Body of pancreas (tissue), 4 donors: ENCODE measurements at regions of chr1 and their contacts with region 1.

Region 1: GRCh38 chr1:181142096-181142958 is 53.8 kb downstream of the IER5 start:
- DNase-seq: peak; percentile 84 to 89 (median 86)
- ATAC-seq: peak; percentile 94
- H3K4me3 ChIP-seq: no peak overlapping the region
- H3K27ac ChIP-seq: no peak overlapping the region
- H3K4me1 ChIP-seq: peaks cover 13% of the 10 kb centered on the region
- H3K27me3 ChIP-seq: no peaks in the 10 kb centered on the region
- CTCF ChIP-seq: peak; percentile 91 to 97 (median 95)
- POLR2A ChIP-seq: no peak

Region 2: GRCh38 chr1:180898441-180899219 is 243.7 kb before region 1 on chr1:
- intact Hi-C with region 1: loop called (anchors 10 kb)
- DNase-seq: peak in 2 of 4 donors; percentile 33 to 43
- ATAC-seq: peak; percentile 70
- H3K4me3 ChIP-seq: no peak overlapping the region
- H3K27ac ChIP-seq: peak overlapping the region in 1 of 4 donors; percentile 45
- H3K4me1 ChIP-seq: peaks cover 17% of the 10 kb centered on the region
- H3K27me3 ChIP-seq: no peaks in the 10 kb centered on the region
- CTCF ChIP-seq: no peak
- POLR2A ChIP-seq: no peak

Region 3: GRCh38 chr1:181033799-181034451 is 108.4 kb before region 1 on chr1 and contains the start of gene MR1:
- intact Hi-C with region 1: loop called (anchors 10 kb)
- DNase-seq: peak; percentile 21 to 65 (median 24)
- ATAC-seq: peak; percentile 96
- H3K4me3 ChIP-seq: peak within 1 kb of the TSS in 1 of 2 donors; percentile 5
- H3K27ac ChIP-seq: peak within 1 kb of the TSS; percentile 65 to 92 (median 82)
- H3K4me1 ChIP-seq: peaks cover 28% of the 10 kb centered on the region
- H3K27me3 ChIP-seq: no peaks in the 10 kb centered on the region
- CTCF ChIP-seq: no peak
- POLR2A ChIP-seq: peak in 2 of 3 donors; percentile 55 to 65
- total RNA-seq, gene MR1: 2.3 to 4.9 TPM

Region 4: GRCh38 chr1:181088079-181089016 is 54.0 kb before region 1 on chr1 and contains the start of gene IER5:
- intact Hi-C with region 1: loop called (anchors 5 kb)
- DNase-seq: peak; percentile 95 to 96 (median 96)
- ATAC-seq: peak; percentile 92
- H3K4me3 ChIP-seq: peak within 1 kb of the TSS in 1 of 2 donors; percentile 65
- H3K27ac ChIP-seq: peak within 1 kb of the TSS; percentile 59 to 81 (median 74)
- H3K4me1 ChIP-seq: peaks cover 37% of the 10 kb centered on the region
- H3K27me3 ChIP-seq: no peaks in the 10 kb centered on the region
- CTCF ChIP-seq: no peak
- POLR2A ChIP-seq: peak; percentile 99 to 100 (median 100)
- total RNA-seq, gene IER5: 6.6 to 6.7 TPM